ENCODE measurements at regions of chr1 and their contacts with region 1.

Region 1: GRCh38 chr1:224513787-224514209 is 79.2 kb upstream of the WDR26 start:
- DNase-seq: peak; percentile 79 to 90 (median 84)
- ATAC-seq: peak; percentile 75 to 95 (median 92)
- H3K4me3 ChIP-seq: no peak overlapping the region
- H3K27ac ChIP-seq: no peak overlapping the region
- H3K4me1 ChIP-seq: peaks cover 0 to 7% (median 0%) of the 10 kb centered on the region in 12 donors
- H3K27me3 ChIP-seq: no peaks in the 10 kb centered on the region
- CTCF ChIP-seq: peak; percentile 83 to 95 (median 91)
- POLR2A ChIP-seq: no peak

Region 2: GRCh38 chr1:224736619-224737352 is 223.0 kb after region 1 on chr1:
- intact Hi-C with region 1: loop called in 1 of 10 experiments (anchors 10 kb)
- DNase-seq: peak in 4 of 5 donors; percentile 26 to 63 (median 32)
- ATAC-seq: peak; percentile 26 to 75 (median 70)
- H3K4me3 ChIP-seq: no peak overlapping the region
- H3K27ac ChIP-seq: peak overlapping the region in 10 of 12 donors; percentile 1 to 74 (median 38)
- H3K4me1 ChIP-seq: peaks cover 0 to 35% (median 21%) of the 10 kb centered on the region in 12 donors
- H3K27me3 ChIP-seq: no peaks in the 10 kb centered on the region
- CTCF ChIP-seq: no peak
- POLR2A ChIP-seq: no peak

Region 3: DNA sequence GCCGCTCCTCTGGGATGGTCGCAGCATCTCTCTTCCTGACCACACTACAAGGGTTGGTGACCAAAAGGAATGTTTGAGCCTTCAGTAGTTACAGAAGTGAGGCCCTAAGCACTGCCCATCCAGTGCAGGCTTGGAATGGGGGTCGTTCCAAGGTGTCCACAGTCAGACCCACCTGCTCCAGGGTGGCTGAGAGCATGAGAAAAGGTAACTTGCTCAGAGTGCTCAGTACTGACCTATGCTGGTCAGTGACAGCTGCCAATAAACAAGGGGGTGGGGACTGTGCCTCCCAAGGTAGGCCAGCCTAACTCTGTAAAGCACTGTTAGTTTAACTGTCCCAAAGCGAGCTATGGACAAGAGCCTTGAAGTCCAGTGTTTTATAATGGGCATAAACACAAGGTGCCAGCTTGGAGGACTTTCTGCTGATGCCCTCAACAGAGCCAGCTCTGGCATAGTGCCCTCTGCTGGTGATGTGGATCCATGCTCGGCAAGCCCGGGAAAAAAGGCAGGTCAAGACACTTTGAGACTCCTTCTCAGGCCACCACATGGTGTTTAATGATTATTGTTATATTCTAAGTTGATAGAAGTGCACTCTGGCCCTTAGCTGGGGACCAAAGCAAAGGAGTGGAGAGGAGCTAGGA is 337.5 kb after region 1 on chr1:
- intact Hi-C with region 1: loop called (anchors 1 to 2 kb)
- DNase-seq: peak; percentile 17 to 67 (median 47)
- ATAC-seq: peak; percentile 42 to 64 (median 50)
- H3K4me3 ChIP-seq: no peak overlapping the region
- H3K27ac ChIP-seq: no peak overlapping the region
- H3K4me1 ChIP-seq: no peaks in the 10 kb centered on the region
- H3K27me3 ChIP-seq: peaks cover 0 to 12% (median 0%) of the 10 kb centered on the region in 9 donors
- CTCF ChIP-seq: peak; percentile 42 to 70 (median 55)
- POLR2A ChIP-seq: no peak

Region 4: GRCh38 chr1:224922404-224923164 is 408.8 kb after region 1 on chr1:
- intact Hi-C with region 1: loop called (anchors 1 to 5 kb)
- DNase-seq: no peak
- ATAC-seq: peak in 3 of 4 donors; percentile 55 to 76 (median 65)
- H3K4me3 ChIP-seq: no peak overlapping the region
- H3K27ac ChIP-seq: no peak overlapping the region
- H3K4me1 ChIP-seq: no peaks in the 10 kb centered on the region
- H3K27me3 ChIP-seq: no peaks in the 10 kb centered on the region
- CTCF ChIP-seq: peak; percentile 53 to 77 (median 62)
- POLR2A ChIP-seq: no peak